ENCODE measurements at regions of chr16 and their contacts with region 1.

Region 1: GRCh38 chr16:15676506-15676905 is 26.5 kb downstream of the NDE1 start:
- DNase-seq: no peak
- H3K4me3 ChIP-seq: no peak overlapping the region
- H3K27ac ChIP-seq: no peak overlapping the region
- H3K4me1 ChIP-seq: peaks cover 0 to 5% of the 10 kb centered on the region in 2 donors
- H3K27me3 ChIP-seq: no peaks in the 10 kb centered on the region
- CTCF ChIP-seq: no peak
- POLR2A ChIP-seq: no peak

Region 2: DNA sequence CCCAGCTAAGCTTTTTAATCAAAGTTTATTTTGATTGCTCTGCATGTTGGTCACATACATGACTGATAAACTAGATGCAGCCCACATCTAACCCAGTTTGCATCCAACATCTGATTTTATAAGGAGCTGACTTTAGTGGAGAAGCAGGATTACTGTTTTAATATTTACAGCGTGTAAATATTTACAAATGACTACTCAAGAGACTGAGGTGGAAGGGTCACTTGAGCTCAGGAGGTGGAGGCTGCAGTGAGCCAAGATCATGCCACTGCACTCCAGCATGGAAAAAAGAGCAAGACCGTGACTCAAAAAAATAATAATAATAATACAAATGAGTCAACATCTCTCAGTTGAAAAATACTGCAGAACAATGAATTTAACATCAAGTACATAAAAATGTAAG is 1097.2 kb before region 1 on chr16:
- intact Hi-C with region 1: no loop called
- DNase-seq: no peak
- H3K4me3 ChIP-seq: no peak overlapping the region
- H3K27ac ChIP-seq: no peak overlapping the region
- H3K4me1 ChIP-seq: no peaks in the 10 kb centered on the region
- H3K27me3 ChIP-seq: no peaks in the 10 kb centered on the region
- CTCF ChIP-seq: no peak
- POLR2A ChIP-seq: no peak

Region 3: DNA sequence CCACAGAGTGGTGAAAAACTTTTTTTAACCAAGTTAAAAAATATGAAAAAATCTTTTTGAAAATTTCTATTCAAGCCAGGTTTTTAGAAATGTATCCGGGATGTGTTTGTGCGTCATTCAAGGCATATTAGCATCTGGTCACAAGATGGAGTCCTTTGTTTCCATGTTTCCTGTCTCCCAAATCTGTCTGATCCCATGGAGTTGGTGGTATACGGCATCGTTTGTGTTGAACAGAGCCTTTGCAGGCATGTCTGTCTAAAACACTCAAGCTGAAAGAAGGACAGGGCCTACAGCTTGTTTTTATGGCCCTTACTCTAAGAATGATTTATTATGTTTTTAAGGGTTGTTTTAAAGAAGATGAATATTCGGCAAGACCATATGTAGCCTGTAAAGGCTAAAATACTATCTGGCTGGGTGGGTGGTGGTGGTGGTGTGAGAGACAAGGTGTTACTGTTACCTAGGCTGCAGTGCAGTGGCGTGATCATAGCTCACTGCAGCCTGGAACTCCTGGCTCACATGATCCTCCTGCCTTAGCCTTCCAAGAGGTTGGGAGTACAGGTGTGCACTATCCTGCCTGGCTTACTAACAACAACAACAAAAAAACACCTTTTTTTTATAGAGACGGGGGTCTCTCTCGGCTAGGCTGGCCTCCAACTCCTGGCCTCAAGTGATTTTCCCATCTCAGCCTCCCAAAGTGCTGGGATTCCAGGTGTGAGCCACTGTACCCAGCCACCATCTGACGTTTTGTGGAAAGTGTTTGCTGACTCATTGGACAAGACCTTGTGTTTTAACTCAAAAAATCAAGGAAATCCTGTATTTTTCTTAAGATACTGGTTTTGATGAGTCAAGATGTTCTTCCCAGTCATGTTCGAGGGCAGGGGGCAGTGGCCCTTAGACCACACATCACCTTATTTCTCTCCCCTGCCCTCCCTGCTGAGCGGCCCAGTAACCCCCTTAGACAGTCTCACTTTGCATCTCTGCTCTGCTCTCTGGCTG is 25.8 kb after region 1 on chr16:
- intact Hi-C with region 1: loop called (anchors 2 kb)
- DNase-seq: no peak
- H3K4me3 ChIP-seq: no peak overlapping the region
- H3K27ac ChIP-seq: no peak overlapping the region
- H3K4me1 ChIP-seq: no peaks in the 10 kb centered on the region
- H3K27me3 ChIP-seq: no peaks in the 10 kb centered on the region
- CTCF ChIP-seq: no peak
- POLR2A ChIP-seq: no peak

Region 4: GRCh38 chr16:15732416-15732815 is 55.9 kb after region 1 on chr16:
- intact Hi-C with region 1: no loop called
- DNase-seq: no peak
- H3K4me3 ChIP-seq: no peak overlapping the region
- H3K27ac ChIP-seq: no peak overlapping the region
- H3K4me1 ChIP-seq: no peaks in the 10 kb centered on the region
- H3K27me3 ChIP-seq: no peaks in the 10 kb centered on the region
- CTCF ChIP-seq: no peak
- POLR2A ChIP-seq: no peak

Region 5: GRCh38 chr16:15792559-15792971 is 116.1 kb after region 1 on chr16:
- intact Hi-C with region 1: no loop called
- DNase-seq: no peak
- H3K4me3 ChIP-seq: no peak overlapping the region
- H3K27ac ChIP-seq: no peak overlapping the region
- H3K4me1 ChIP-seq: no peaks in the 10 kb centered on the region
- H3K27me3 ChIP-seq: no peaks in the 10 kb centered on the region
- CTCF ChIP-seq: no peak
- POLR2A ChIP-seq: no peak

Measured in breast epithelium (tissue), 4 donors.